ENCODE measurements at regions of chr4 and their contacts with region 1.

Region 1: DNA sequence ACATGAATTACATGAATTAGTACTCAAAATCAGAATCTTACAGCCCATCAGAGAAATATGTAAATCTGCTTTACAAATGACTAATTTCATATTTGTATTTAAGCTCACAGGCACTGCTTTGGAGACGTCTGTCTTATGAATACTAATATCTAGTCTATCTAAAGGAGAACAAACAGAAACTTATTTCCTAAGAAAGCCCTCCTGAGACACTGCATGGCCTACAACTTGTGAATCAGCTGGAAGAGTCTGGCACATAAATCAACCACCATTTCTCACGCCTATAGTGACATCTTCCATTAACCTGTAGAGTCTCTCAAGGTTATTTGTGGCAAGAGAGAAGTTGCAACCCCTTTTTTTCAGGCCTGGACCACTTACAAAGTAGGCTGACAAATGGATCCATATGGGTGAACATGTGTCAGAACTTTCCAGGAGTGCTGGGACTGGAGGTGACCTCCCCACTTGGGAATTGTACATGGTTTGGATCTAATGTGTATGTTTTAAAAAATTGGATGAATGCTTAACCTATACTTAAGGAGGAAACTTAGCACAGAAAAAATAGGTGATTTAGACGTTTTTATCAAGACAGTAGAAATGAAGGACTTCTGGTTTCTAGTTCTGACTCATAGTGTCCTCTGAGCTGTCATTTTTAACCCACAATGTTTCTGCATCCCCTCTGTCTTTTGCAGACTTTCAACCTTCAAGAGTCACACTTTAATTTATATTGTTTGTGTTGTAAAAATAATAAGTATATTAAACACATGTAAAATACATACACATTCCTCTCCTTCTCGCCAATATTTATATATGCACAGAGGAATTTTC is 83.2 kb upstream of the ARHGAP24 start:
- DNase-seq: no peak
- H3K4me3 ChIP-seq: no peak overlapping the region
- H3K27ac ChIP-seq: no peak overlapping the region
- H3K4me1 ChIP-seq: no peaks in the 10 kb centered on the region
- H3K27me3 ChIP-seq: no peaks in the 10 kb centered on the region
- CTCF ChIP-seq: no peak
- EP300 ChIP-seq: no peak
- POLR2A ChIP-seq: no peak
- RAD21 ChIP-seq: no peak

Region 2: DNA sequence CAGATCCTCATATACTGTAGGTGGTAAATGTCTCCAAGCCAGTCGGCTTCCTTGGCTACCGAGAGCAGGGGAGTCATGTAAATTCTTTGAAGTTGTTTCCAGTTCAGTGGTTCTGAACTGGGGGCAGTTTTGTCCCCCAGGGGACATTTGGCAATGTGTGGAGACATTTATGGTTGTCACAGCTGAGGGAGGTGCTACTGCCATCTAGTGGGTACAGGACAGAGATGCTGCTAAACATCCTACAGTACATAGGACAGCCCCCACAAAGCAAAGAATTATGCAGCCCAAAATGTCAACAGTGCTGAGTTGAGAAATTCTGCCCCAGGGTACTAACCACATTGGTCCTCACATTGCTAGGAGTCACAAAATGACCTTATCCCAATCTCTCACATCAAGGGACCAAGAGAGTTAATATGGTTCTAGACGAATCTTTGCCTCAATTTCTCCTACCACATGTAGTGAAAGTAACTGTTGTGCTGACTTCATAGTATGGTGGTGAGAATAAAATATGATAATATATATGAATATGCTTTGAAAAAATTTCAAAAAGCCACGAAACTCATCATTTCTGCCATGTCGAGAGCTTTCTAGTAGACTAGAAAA is 21.3 kb before region 1 on chr4:
- CTCF ChIA-PET with region 1: interaction called, 10 read pairs
- POLR2A ChIA-PET with region 1: no interaction called
- DNase-seq: peak; percentile 7 to 63
- H3K4me3 ChIP-seq: no peak overlapping the region
- H3K27ac ChIP-seq: no peak overlapping the region
- H3K4me1 ChIP-seq: peaks cover 0 to 10% (median 0%) of the 10 kb centered on the region in 4 experiments; a peak in 1 of 7 replicates
- H3K27me3 ChIP-seq: no peaks in the 10 kb centered on the region
- CTCF ChIP-seq: peak; percentile 52 to 84 (median 79)
- EP300 ChIP-seq: no peak
- POLR2A ChIP-seq: no peak
- RAD21 ChIP-seq: peak; percentile 82 to 89

Region 3: DNA sequence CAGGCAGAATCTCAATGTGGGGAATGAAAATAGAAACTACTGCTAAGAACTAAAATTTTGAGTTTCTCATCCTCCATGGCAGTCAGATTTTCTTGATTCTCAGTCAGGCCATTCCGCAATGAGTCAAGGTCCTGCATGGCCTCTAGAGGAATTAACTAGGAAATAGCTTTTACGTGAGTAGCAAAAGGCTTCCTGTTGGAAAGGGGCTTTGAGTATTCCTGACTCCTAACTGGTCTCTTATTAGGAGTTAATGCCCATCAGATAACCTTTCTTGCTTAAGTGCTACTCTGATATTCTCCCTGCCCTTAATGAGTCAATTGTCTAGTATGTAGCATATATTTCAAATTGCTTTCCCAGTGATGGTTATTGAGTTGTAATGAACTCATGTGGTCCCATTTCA is 17.5 kb after region 1 on chr4:
- CTCF ChIA-PET with region 1: no interaction called
- POLR2A ChIA-PET with region 1: no interaction called
- DNase-seq: no peak
- H3K4me3 ChIP-seq: no peak overlapping the region
- H3K27ac ChIP-seq: no peak overlapping the region
- H3K4me1 ChIP-seq: no peaks in the 10 kb centered on the region
- H3K27me3 ChIP-seq: no peaks in the 10 kb centered on the region
- CTCF ChIP-seq: no peak
- EP300 ChIP-seq: no peak
- POLR2A ChIP-seq: no peak
- RAD21 ChIP-seq: no peak